ENCODE measurements at regions of chr9 and their contacts with region 1.

Region 1: GRCh38 chr9:36873247-36873875 is 160.7 kb downstream of the PAX5 start:
- DNase-seq: peak; percentile 83
- ATAC-seq: peak; percentile 93
- H3K4me3 Mint-ChIP-seq: no peak overlapping the region
- H3K27ac Mint-ChIP-seq: no peak overlapping the region
- H3K4me1 Mint-ChIP-seq: peaks cover 8% of the 10 kb centered on the region
- H3K27me3 Mint-ChIP-seq: no peaks in the 10 kb centered on the region
- CTCF ChIP-seq: peak; percentile 88

Region 2: GRCh38 chr9:36833954-36834353 is 39.4 kb before region 1 on chr9:
- CTCF ChIA-PET with region 1: interaction called, 10 read pairs
- POLR2A ChIA-PET with region 1: no interaction called
- DNase-seq: peak; percentile 49
- ATAC-seq: peak; percentile 89
- H3K4me3 Mint-ChIP-seq: no peak overlapping the region
- H3K27ac Mint-ChIP-seq: no peak overlapping the region
- H3K4me1 Mint-ChIP-seq: peaks cover 43% of the 10 kb centered on the region
- H3K27me3 Mint-ChIP-seq: no peaks in the 10 kb centered on the region
- CTCF ChIP-seq: no peak

Region 3: DNA sequence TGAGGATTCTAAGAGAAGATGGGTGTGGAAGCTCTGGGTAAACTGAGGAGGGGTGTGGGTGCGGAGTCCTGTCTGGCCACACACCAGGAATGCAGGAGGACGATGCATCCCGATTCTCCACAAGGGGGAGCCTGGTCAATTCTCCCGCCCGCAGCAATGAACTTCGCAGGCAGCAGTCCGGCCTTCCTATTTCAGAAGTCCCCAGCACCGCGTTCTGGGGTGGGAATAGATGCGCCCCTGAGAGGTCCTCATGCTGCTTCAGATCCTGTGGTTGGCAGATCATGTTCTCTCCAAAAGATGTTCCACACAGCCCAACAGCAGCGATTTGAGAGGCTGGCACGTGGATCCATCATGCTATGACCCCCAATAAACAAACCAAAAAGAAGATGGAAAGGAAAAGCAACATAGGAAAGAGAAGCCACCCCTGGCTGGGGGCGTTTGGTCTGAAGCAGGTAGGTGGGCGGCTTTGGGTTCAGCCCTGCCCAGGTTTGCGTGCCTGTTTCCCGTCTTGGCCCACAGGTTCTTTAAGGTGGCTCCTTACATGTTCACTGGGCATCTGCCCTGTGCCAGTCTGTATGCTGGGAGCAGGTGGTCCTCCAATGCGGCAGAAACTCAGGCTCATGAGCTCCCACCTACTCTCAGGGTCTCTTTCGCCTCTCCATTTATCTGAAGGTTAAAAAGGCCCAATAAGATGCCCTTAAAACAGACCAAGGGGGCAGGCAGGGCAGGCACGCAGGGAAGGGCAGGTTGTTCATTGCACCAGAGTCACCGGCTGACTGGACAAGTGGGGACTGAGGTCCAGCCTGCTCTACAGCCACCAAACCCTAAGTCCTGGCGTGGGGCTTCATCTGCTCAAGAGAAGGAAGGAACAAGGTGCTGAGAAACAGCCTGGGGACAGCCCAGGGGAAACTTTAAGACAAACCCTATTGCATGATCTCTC is 10.9 kb before region 1 on chr9:
- CTCF ChIA-PET with region 1: interaction called, 46 read pairs
- POLR2A ChIA-PET with region 1: no interaction called
- DNase-seq: peak; percentile 74
- ATAC-seq: peak; percentile 62
- H3K4me3 Mint-ChIP-seq: no peak overlapping the region
- H3K27ac Mint-ChIP-seq: no peak overlapping the region
- H3K4me1 Mint-ChIP-seq: peaks cover 22% of the 10 kb centered on the region
- H3K27me3 Mint-ChIP-seq: peaks cover 40% of the 10 kb centered on the region
- CTCF ChIP-seq: peak; percentile 44

Region 4: GRCh38 chr9:36903541-36904435 is 30.4 kb after region 1 on chr9:
- CTCF ChIA-PET with region 1: interaction called, 70 read pairs
- POLR2A ChIA-PET with region 1: no interaction called
- DNase-seq: no peak
- ATAC-seq: no peak
- H3K4me3 Mint-ChIP-seq: no peak overlapping the region
- H3K27ac Mint-ChIP-seq: no peak overlapping the region
- H3K4me1 Mint-ChIP-seq: peaks cover 6% of the 10 kb centered on the region
- H3K27me3 Mint-ChIP-seq: peaks cover 4% of the 10 kb centered on the region; the same call in 1 of the 2 replicates
- CTCF ChIP-seq: no peak

Region 5: DNA sequence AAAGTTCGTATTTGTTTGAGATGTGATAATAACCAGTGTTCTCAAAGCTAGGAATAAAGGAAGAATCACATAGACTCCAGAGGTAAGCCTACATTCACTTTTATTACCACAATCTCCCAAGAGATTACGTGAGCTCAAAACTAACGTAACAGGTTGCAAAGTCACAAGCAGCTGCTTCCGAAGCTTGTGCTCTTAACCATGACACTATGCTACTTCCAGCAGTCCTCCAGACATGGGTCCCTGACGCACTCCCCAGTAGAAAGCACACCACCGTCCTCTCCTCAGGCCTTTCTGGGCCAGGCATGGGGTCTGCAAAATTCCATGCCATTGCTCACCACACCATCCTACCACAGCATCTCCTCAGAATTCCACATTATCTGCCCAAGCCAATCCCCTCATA is 76.1 kb after region 1 on chr9:
- CTCF ChIA-PET with region 1: interaction called, 15 read pairs
- POLR2A ChIA-PET with region 1: no interaction called
- DNase-seq: no peak
- ATAC-seq: no peak
- H3K4me3 Mint-ChIP-seq: no peak overlapping the region
- H3K27ac Mint-ChIP-seq: no peak overlapping the region; the same call in 1 of the 2 replicates
- H3K4me1 Mint-ChIP-seq: peaks cover 27% of the 10 kb centered on the region
- H3K27me3 Mint-ChIP-seq: no peaks in the 10 kb centered on the region
- CTCF ChIP-seq: no peak

Region 6: DNA sequence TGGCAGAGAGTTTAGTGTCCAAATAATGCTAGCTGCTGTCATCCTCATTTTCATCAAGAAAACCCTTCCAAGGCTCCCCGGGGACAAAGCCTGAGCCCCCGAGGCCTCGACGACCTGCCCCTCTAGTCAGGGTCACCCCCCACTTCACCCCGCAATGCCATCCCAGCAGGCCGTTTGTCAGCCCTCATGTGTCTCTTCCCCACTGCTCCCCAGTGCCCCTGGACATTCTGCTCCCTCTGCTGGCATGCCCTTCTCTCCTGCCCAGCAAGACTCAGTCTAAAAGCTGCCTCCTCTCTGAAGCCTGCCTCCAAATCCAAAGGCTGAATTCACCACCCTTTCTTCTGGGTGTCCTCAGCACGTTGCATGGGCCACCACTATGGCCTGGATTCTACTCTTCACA is 101.4 kb after region 1 on chr9:
- CTCF ChIA-PET with region 1: interaction called, 53 read pairs
- POLR2A ChIA-PET with region 1: no interaction called
- DNase-seq: no peak
- ATAC-seq: peak; percentile 58
- H3K4me3 Mint-ChIP-seq: no peak overlapping the region
- H3K27ac Mint-ChIP-seq: no peak overlapping the region
- H3K4me1 Mint-ChIP-seq: peaks cover 3% of the 10 kb centered on the region
- H3K27me3 Mint-ChIP-seq: no peaks in the 10 kb centered on the region
- CTCF ChIP-seq: no peak

Region 7: DNA sequence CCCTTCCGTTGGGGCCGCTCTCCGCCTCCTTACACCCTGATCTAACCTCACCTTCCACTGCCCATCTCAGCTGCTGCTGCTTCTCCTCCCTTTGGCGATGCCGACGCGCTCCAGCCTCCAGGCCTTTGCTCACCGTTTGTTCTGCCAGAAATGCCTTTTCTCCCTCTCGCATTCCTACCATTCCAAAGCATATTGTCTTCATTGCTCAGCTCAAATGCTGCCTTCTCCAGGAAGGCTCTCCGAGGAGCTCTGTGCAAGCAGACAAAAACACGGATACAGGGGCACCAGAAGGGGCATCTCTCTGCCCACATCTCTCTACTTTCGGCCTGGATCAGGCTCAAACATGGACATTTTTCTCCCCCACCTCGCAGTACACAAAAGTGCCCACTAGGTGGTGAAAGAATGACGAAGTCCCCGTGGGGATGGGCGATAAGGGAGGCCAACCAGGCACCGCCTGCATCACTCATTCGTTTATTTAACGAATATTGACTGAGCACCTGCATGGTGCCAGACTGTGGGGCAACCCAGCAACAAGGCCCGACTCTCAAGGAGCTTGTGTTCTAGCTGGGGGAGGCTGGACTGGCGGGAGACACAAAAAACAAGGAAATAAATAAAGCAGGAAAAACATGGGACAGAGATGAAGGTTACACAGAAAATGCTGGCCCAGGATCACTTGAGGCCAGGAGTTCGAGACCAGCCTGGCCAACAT is 541.8 kb after region 1 on chr9:
- CTCF ChIA-PET with region 1: interaction called, 11 read pairs
- POLR2A ChIA-PET with region 1: no interaction called
- DNase-seq: peak; percentile 75
- ATAC-seq: peak; percentile 70
- H3K4me3 Mint-ChIP-seq: peak overlapping the region; percentile 40
- H3K27ac Mint-ChIP-seq: peak overlapping the region; percentile 81
- H3K4me1 Mint-ChIP-seq: peaks cover 45% of the 10 kb centered on the region
- H3K27me3 Mint-ChIP-seq: peaks cover 2% of the 10 kb centered on the region; the same call in 1 of the 2 replicates
- CTCF ChIP-seq: peak; percentile 67

Measured in WTC11 (cell line).